ENCODE measurements at regions of chr10 and their contacts with region 1.

Region 1: GRCh38 chr10:93977442-93977841 is 16.3 kb upstream of the PLCE1 start:
- DNase-seq: no peak
- ATAC-seq: peak; percentile 59; the same call in 1 of the 2 replicates
- H3K4me3 ChIP-seq: no peak overlapping the region
- H3K27ac ChIP-seq: no peak overlapping the region
- H3K4me1 ChIP-seq: no peaks in the 10 kb centered on the region
- H3K27me3 ChIP-seq: no peaks in the 10 kb centered on the region
- CTCF ChIP-seq: peak in 2 of 3 experiments; percentile 15 to 19; a peak in 1 of 6 replicates
- POLR2A ChIP-seq: no peak
- RAD21 ChIP-seq: no peak

Region 2: GRCh38 chr10:93999401-93999851 is 22.0 kb after region 1 on chr10:
- CTCF ChIA-PET with region 1: no interaction called
- POLR2A ChIA-PET with region 1: no interaction called
- RAD21 ChIA-PET with region 1: no interaction called
- intact Hi-C with region 1: no loop called
- DNase-seq: no peak
- ATAC-seq: no peak
- H3K4me3 ChIP-seq: no peak overlapping the region
- H3K27ac ChIP-seq: no peak overlapping the region
- H3K4me1 ChIP-seq: peaks cover 0 to 10% of the 10 kb centered on the region in 2 experiments; a peak in 1 of 4 replicates
- H3K27me3 ChIP-seq: no peaks in the 10 kb centered on the region
- CTCF ChIP-seq: no peak
- POLR2A ChIP-seq: no peak
- RAD21 ChIP-seq: no peak

Region 3: DNA sequence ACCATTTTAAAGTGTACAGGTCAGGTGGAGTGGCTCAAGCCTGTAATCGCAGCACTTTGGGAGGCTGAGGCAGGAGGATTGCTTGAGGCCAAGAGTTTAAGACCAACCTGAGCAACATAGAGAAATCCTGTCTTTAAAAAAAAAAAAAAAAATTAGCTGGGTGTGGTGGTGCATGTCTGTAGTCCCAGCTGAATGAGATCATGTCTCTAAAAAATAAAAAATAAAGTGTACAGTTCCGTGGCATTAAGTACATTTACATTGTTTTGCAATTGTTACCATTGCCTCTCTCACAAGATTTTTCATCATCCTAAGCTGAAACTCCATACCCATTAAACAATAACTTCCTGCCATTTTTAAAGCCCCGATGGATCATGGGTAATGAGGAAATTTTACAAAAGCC is 36.9 kb after region 1 on chr10:
- CTCF ChIA-PET with region 1: no interaction called
- POLR2A ChIA-PET with region 1: no interaction called
- RAD21 ChIA-PET with region 1: no interaction called
- intact Hi-C with region 1: loop called (anchors 1 kb)
- DNase-seq: no peak
- ATAC-seq: no peak
- H3K4me3 ChIP-seq: no peak overlapping the region
- H3K27ac ChIP-seq: no peak overlapping the region
- H3K4me1 ChIP-seq: peaks cover 0 to 4% of the 10 kb centered on the region in 2 experiments; a peak in 2 of 4 replicates
- H3K27me3 ChIP-seq: no peaks in the 10 kb centered on the region
- CTCF ChIP-seq: no peak
- POLR2A ChIP-seq: no peak
- RAD21 ChIP-seq: no peak

Measured in HCT116 (cell line).